ENCODE measurements at regions of chr5 and their contacts with region 1.

Region 1: DNA sequence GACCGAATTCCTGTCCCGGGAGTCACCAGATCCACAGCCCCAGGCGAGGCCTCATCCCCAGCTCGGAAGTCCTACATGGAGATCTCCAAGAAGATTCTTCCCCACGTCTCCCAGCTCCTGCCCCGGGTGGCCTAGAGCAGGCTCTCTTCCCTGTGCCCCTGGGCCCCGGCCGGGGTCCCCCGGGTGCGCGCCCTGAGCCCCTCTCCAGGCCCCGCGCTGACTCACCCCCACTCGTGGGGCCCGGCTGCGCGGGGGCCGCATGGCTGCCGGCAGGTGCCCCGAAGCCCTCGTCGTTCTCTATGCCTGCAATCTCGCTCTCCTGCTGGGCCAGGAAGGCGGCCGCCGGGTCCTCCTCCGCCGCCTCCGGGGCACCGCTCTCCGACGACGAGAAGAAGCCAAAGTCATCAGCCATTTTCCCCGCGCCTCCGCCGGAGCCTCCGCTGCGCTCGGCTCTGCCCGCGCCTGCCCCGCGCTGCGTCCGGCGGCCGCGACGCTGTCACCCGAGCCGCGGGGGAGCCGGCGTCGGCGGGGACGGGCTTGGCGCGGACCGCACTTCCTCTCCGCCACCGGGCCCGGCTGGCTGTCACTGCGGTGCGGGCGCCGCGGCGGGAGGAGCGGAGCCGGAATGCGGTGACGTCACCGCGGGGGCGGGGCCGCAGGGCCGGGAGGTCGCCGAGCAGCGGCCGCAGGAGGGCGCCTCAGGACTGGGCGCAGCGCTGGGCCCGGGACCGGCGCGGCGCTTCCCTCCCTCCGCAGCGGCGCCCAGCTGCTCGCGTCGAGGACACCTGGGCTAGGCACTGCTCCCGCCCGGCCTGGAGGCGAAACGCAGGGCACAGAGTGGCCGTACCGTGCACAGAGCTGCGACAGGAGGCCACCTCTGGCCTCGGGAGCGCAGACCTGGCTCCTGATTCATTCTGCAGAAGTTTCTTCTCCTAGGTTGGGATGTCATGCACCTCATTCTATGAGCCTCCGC is at the start of gene CLTB:
- DNase-seq: peak; percentile 93
- ATAC-seq: peak; percentile 83
- H3K4me3 ChIP-seq: peak within 1 kb of the TSS; percentile 94
- H3K27ac ChIP-seq: peak within 1 kb of the TSS; percentile 69
- H3K4me1 ChIP-seq: peaks cover 59% of the 10 kb centered on the region
- H3K27me3 ChIP-seq: no peaks in the 10 kb centered on the region
- CTCF ChIP-seq: peak; percentile 58
- total RNA-seq, gene CLTB: 354 and 460 TPM in 2 replicates

Region 2: DNA sequence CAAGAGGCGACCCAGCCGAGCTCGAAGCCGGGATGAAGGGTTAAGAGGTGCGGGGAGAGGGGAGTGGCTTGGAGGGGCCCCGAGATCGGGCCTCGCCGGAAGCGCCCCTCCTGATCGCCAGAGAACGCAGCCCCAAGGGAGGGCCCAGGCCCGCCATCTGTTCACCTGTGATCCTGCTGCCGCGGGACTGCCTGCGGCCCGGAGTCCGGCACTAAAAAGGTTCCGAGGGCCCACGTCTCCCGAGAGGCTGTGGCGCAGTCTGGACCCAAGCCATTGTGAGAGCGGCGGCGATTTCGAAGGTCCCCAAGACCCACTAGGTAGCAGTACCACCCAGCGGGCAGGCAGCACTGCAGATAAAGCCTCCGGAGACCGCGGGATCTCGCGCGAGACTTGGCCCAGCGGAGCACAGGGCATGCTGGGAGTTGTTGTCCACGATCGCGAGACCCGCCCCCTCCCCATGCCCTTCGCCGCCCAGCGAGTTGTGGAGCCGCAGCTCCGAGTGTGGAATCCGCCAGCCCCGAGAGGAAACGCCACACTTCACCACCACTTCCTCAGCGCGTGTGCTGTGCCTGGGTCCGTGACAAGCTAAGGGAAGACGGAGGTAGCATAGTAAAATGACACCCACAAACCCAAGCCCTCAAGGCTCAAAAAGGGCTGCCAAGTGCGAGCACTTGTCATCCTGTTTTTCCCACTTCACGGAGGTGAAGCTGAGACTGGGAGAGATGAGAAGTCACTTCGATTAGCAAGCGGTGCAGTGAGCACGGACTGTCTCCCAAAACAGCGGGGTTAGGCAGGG is 54.6 kb before region 1 on chr5 and contains the start of gene KIAA1191:
- CTCF ChIA-PET with region 1: no interaction called
- POLR2A ChIA-PET with region 1: no interaction called
- intact Hi-C with region 1: loop called (anchors 2 kb)
- DNase-seq: peak; percentile 87
- ATAC-seq: peak; percentile 96
- H3K4me3 ChIP-seq: peak within 1 kb of the TSS; percentile 95
- H3K27ac ChIP-seq: no peak within 1 kb of the TSS
- H3K4me1 ChIP-seq: peaks cover 11% of the 10 kb centered on the region; the same call in 1 of the 2 replicates
- H3K27me3 ChIP-seq: no peaks in the 10 kb centered on the region
- CTCF ChIP-seq: no peak
- total RNA-seq, gene KIAA1191: 69.5 and 81.1 TPM in 2 replicates